BJ (cell line): ENCODE measurements at regions of chr5 and their contacts with region 1.

Region 1: DNA sequence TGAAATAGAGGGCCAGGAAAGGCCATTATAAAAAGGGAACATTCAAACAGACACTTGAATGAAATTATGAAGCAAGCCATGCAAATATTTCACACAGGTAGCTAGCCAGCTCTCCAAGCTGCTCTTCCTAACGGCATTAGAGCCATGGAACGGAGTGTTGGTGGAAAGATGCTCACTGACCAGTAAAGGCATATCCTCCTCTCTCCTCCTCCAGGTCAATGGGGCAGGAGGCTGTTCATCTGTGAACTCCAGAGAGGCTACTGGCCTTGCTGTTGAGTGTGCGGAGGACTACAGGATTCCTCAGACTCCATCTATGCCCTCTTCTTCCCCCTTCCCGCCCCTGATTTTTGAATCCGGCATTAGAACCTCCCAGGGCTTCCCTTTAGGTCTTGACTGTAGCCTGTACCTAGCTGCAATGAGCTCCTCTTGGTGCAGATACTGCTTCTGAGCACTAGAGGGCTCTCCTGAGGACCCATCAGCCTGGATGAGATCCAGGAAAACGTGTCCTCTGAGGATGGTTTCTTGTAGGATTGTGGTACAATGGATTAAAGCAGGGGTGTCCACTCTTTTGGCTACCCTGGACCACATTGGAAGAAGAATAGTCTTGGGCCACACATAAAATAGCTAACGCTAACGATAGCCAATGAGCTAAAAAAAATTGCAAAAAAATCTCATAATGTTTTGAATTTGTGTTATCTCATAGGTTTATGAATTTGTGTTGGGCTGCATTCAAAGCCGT is 162.2 kb downstream of the SREK1 start:
- DNase-seq: peak; percentile 4
- H3K4me3 ChIP-seq: no peak overlapping the region
- H3K27me3 ChIP-seq: no peaks in the 10 kb centered on the region; the same call in none of the 2 replicates
- CTCF ChIP-seq: peak; percentile 97

Region 2: DNA sequence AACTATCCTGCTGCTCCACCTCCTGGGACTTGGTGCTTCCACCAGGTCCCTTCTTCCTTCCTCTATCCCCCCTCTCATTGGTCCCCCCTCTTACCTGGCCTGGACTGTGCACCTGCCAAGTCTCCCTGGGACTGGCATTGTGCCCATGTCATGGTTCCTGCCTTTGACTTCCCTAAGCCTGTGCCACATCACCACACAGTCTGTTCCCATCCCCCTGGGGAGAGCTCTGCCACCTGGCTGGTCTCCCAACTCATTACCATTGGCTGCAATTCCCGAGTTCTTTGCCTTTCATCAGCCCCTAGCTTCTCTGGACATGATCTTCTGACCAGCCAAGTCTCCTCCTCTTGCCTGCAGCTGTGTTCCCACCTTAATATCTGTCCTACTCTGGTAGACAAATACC is 18.1 kb after region 1 on chr5:
- CTCF ChIA-PET with region 1: interaction called, 25 read pairs
- POLR2A ChIA-PET with region 1: no interaction called
- DNase-seq: no peak
- H3K4me3 ChIP-seq: no peak overlapping the region
- H3K27me3 ChIP-seq: peaks cover 1% of the 10 kb centered on the region; the same call in 1 of the 2 replicates
- CTCF ChIP-seq: no peak

Region 3: GRCh38 chr5:66757188-66757833 is 451.0 kb after region 1 on chr5:
- CTCF ChIA-PET with region 1: interaction called, 12 read pairs
- POLR2A ChIA-PET with region 1: no interaction called
- DNase-seq: no peak
- H3K4me3 ChIP-seq: no peak overlapping the region
- H3K27me3 ChIP-seq: peaks cover 2% of the 10 kb centered on the region; the same call in 1 of the 2 replicates
- CTCF ChIP-seq: peak; percentile 15; the same call in 1 of the 2 replicates